ENCODE measurements at regions of chr4 and their contacts with region 1.

Region 1: GRCh38 chr4:79588689-79589088 is 180.7 kb upstream of the GK2 start:
- DNase-seq: no peak
- ATAC-seq: no peak
- H3K4me3 ChIP-seq: no peak overlapping the region
- H3K4me3 Mint-ChIP-seq: no peak overlapping the region
- H3K27ac ChIP-seq: no peak overlapping the region
- H3K27ac Mint-ChIP-seq: no peak overlapping the region
- H3K4me1 ChIP-seq: no peaks in the 10 kb centered on the region
- H3K4me1 Mint-ChIP-seq: no peaks in the 10 kb centered on the region
- H3K27me3 ChIP-seq: peaks cover 0 to 3% of the 10 kb centered on the region in 2 donors
- H3K27me3 Mint-ChIP-seq: peaks cover 0 to 5% (median 0%) of the 10 kb centered on the region in 5 donors

Region 2: DNA sequence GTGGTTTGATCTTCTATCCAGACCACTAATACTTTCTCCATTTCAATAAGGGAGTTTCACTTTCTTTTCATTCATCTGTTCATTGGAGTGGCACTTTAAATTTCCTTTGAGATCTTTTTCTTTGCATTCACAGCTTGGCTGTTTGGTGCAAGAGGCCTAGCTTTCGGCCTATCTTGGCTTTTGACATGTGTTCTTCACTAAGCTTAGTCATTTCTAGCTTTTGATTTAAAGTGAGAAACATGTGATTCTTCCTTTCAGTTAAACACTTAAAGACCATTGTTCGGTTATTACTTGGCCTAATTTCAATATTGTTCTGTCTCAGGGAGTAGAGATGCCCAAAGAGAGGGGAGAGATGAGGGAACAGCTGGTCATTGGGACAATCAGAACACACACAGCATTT is 1958.8 kb before region 1 on chr4:
- CTCF ChIA-PET with region 1: no interaction called
- POLR2A ChIA-PET with region 1: no interaction called
- intact Hi-C with region 1: loop called in 1 of 2 experiments (anchors 10 kb)
- DNase-seq: no peak
- ATAC-seq: no peak
- H3K4me3 ChIP-seq: no peak overlapping the region
- H3K4me3 Mint-ChIP-seq: peak overlapping the region in 5 of 10 donors; percentile 2 to 45 (median 32)
- H3K27ac ChIP-seq: no peak overlapping the region
- H3K27ac Mint-ChIP-seq: peak overlapping the region in 4 of 9 donors; percentile 3 to 37 (median 18)
- H3K4me1 ChIP-seq: peaks cover 0 to 5% of the 10 kb centered on the region in 2 donors
- H3K4me1 Mint-ChIP-seq: peaks cover 3 to 17% (median 7%) of the 10 kb centered on the region in 7 donors
- H3K27me3 ChIP-seq: no peaks in the 10 kb centered on the region
- H3K27me3 Mint-ChIP-seq: no peaks in the 10 kb centered on the region

Region 3: GRCh38 chr4:78171482-78171881 is 1417.2 kb before region 1 on chr4:
- CTCF ChIA-PET with region 1: no interaction called
- POLR2A ChIA-PET with region 1: no interaction called
- intact Hi-C with region 1: no loop called
- DNase-seq: no peak
- ATAC-seq: no peak
- H3K4me3 ChIP-seq: no peak overlapping the region
- H3K4me3 Mint-ChIP-seq: no peak overlapping the region
- H3K27ac ChIP-seq: no peak overlapping the region
- H3K27ac Mint-ChIP-seq: no peak overlapping the region
- H3K4me1 ChIP-seq: no peaks in the 10 kb centered on the region
- H3K4me1 Mint-ChIP-seq: peaks cover 0 to 7% (median 0%) of the 10 kb centered on the region in 7 donors
- H3K27me3 ChIP-seq: no peaks in the 10 kb centered on the region
- H3K27me3 Mint-ChIP-seq: peaks cover 8 to 24% (median 20%) of the 10 kb centered on the region in 5 donors

Region 4: DNA sequence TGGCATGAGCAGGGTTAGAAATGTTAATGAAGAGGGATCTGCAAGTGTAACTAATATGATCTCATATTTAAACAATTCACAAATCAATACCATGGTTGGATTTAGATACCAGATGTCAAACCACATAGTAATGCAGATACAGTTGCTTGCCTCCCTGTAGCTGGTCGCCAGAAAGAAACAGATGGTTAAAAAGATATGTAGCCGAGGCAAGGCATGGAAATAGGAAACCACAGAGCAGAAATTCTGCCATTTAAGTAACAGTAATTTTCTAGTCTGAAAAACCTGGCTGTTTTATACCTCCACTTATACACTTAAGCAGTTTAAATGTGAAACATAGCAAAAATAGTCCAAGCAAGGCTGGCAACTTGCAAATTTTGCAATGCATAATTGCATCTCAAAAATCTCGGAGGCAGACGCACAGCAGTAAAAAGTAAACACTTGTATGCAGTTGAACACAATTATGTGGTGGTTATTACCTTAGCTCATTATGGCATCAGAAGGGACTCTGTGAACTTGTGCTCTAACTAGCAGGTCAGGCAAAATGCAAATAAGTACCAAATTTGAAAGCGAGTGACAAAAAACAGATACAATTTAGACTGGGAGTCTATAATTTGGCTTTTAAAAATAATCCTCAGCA is 389.6 kb before region 1 on chr4:
- CTCF ChIA-PET with region 1: no interaction called
- POLR2A ChIA-PET with region 1: no interaction called
- intact Hi-C with region 1: no loop called
- DNase-seq: no peak
- ATAC-seq: no peak
- H3K4me3 ChIP-seq: no peak overlapping the region
- H3K4me3 Mint-ChIP-seq: no peak overlapping the region
- H3K27ac ChIP-seq: no peak overlapping the region
- H3K27ac Mint-ChIP-seq: no peak overlapping the region
- H3K4me1 ChIP-seq: no peaks in the 10 kb centered on the region
- H3K4me1 Mint-ChIP-seq: no peaks in the 10 kb centered on the region
- H3K27me3 ChIP-seq: no peaks in the 10 kb centered on the region
- H3K27me3 Mint-ChIP-seq: peaks cover 0 to 7% (median 0%) of the 10 kb centered on the region in 5 donors

Region 5: GRCh38 chr4:79552311-79552710 is 36.4 kb before region 1 on chr4:
- CTCF ChIA-PET with region 1: no interaction called
- POLR2A ChIA-PET with region 1: no interaction called
- intact Hi-C with region 1: no loop called
- DNase-seq: no peak
- ATAC-seq: no peak
- H3K4me3 ChIP-seq: no peak overlapping the region
- H3K4me3 Mint-ChIP-seq: no peak overlapping the region
- H3K27ac ChIP-seq: no peak overlapping the region
- H3K27ac Mint-ChIP-seq: no peak overlapping the region
- H3K4me1 ChIP-seq: no peaks in the 10 kb centered on the region
- H3K4me1 Mint-ChIP-seq: no peaks in the 10 kb centered on the region
- H3K27me3 ChIP-seq: no peaks in the 10 kb centered on the region
- H3K27me3 Mint-ChIP-seq: peaks cover 0 to 5% (median 0%) of the 10 kb centered on the region in 5 donors